ENCODE measurements at regions of chr5 and their contacts with region 1.

Region 1: DNA sequence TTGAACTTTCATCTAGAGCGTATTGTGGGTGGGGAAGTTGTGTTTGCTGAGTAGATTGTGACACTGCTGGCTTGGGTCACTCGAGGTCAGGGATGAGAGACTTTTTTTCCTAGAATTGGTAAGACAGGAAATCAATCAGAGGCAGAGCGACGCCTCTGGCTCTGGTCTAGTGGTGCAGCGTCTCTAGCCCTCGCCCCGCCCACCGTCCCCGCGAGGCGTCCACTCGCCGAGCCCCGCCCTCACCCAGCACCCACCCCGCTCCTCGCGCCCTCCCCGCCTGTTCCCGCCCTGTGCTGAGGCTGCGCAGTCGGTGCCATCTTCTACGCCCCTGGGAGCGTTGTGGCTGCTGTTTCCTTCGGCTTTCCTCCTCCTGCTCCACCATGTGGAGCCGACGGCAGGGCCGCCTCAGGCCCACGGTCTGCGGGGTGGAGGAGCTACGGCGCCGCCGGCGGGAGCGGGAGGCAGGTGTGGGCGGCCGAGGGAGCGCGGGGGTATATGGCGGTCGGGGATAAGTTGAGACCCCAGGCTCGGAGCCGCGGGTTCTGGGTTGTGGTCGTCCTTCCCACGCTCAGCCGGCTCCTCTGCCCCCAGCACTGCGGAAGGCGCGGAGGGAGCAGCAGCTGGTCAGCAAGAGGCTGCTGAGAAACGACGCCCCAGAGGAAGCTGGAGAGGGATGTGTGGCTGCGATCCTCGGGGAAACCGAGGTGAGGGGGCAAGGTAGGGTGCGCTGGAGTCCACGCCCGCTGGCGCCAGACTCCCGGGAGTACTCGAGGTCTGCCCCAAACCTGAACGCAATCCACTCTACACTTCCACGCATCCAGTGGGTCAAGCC is at the start of gene TMCO6:
- DNase-seq: peak; percentile 99
- H3K4me3 Mint-ChIP-seq: peak within 1 kb of the TSS; percentile 85
- H3K27ac Mint-ChIP-seq: peak within 1 kb of the TSS; percentile 94
- H3K4me1 Mint-ChIP-seq: peaks cover 41% of the 10 kb centered on the region
- H3K27me3 Mint-ChIP-seq: no peaks in the 10 kb centered on the region
- total RNA-seq, gene TMCO6: 33.7 to 33.8 TPM

Region 2: GRCh38 chr5:140362860-140363630 is 276.3 kb before region 1 on chr5:
- CTCF ChIA-PET with region 1: interaction called, 7 read pairs
- POLR2A ChIA-PET with region 1: no interaction called
- intact Hi-C with region 1: loop called (anchors 1 kb)
- DNase-seq: peak; percentile 91
- H3K4me3 Mint-ChIP-seq: peak overlapping the region; percentile 72
- H3K27ac Mint-ChIP-seq: peak overlapping the region; percentile 52
- H3K4me1 Mint-ChIP-seq: peaks cover 4% of the 10 kb centered on the region
- H3K27me3 Mint-ChIP-seq: peaks cover 3% of the 10 kb centered on the region

Region 3: DNA sequence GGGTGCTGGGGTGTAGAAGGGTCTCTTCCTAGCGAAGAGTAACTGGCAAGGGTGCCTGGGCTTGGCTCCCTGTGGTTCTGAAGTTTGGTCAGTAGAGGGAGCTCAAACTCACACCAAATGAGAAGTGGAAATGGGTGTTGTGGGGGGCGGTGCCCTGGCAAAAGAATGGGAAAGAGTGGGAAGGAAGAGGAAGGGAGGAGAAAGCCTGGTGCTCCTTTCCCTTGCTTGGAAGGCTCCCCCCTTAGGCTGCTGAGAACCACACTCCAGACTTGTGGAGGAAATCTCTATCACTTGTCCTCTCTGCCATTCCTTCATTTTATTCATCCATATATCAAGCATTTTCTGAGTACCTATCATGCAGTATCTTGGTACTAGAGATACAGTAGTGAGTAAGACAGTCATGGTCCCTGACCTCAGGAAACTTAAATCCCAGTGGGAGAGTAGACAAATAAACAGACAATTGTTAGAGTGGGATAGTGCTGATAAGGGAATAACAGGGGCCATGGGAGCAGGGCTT is 266.3 kb before region 1 on chr5:
- CTCF ChIA-PET with region 1: interaction called, 30 read pairs
- POLR2A ChIA-PET with region 1: no interaction called
- intact Hi-C with region 1: loop called (anchors 1 kb)
- DNase-seq: peak; percentile 48
- H3K4me3 Mint-ChIP-seq: no peak overlapping the region
- H3K27ac Mint-ChIP-seq: no peak overlapping the region
- H3K4me1 Mint-ChIP-seq: peaks cover 3% of the 10 kb centered on the region
- H3K27me3 Mint-ChIP-seq: no peaks in the 10 kb centered on the region

Region 4: GRCh38 chr5:140547508-140548299 is 91.7 kb before region 1 on chr5 and contains the start of gene EIF4EBP3:
- CTCF ChIA-PET with region 1: interaction called, 17 read pairs
- POLR2A ChIA-PET with region 1: interaction called, 6 read pairs
- intact Hi-C with region 1: no loop called
- DNase-seq: peak; percentile 91
- H3K4me3 Mint-ChIP-seq: peak within 1 kb of the TSS; percentile 76
- H3K27ac Mint-ChIP-seq: peak within 1 kb of the TSS; percentile 90
- H3K4me1 Mint-ChIP-seq: peaks cover 44% of the 10 kb centered on the region
- H3K27me3 Mint-ChIP-seq: no peaks in the 10 kb centered on the region
- total RNA-seq, gene EIF4EBP3: 15.7 to 16.6 TPM

Region 5: GRCh38 chr5:140557136-140557805 is 82.1 kb before region 1 on chr5 and contains the start of gene SRA1:
- CTCF ChIA-PET with region 1: interaction called, 9 read pairs
- POLR2A ChIA-PET with region 1: interaction called, 6 read pairs
- intact Hi-C with region 1: loop called (anchors 1 kb)
- DNase-seq: peak; percentile 93
- H3K4me3 Mint-ChIP-seq: peak within 1 kb of the TSS; percentile 86
- H3K27ac Mint-ChIP-seq: peak within 1 kb of the TSS; percentile 90
- H3K4me1 Mint-ChIP-seq: peaks cover 45% of the 10 kb centered on the region
- H3K27me3 Mint-ChIP-seq: no peaks in the 10 kb centered on the region
- total RNA-seq, gene SRA1: 46.0 to 46.7 TPM

Region 6: GRCh38 chr5:140564196-140565023 is 75.0 kb before region 1 on chr5 and contains the starts of genes APBB3 and SLC35A4:
- CTCF ChIA-PET with region 1: interaction called, 14 read pairs
- POLR2A ChIA-PET with region 1: no interaction called
- intact Hi-C with region 1: loop called (anchors 1 kb)
- DNase-seq: peak; percentile 98
- H3K4me3 Mint-ChIP-seq: peak within 1 kb of the TSS; percentile 91
- H3K27ac Mint-ChIP-seq: peak within 1 kb of the TSS; percentile 93
- H3K4me1 Mint-ChIP-seq: peaks cover 47% of the 10 kb centered on the region
- H3K27me3 Mint-ChIP-seq: no peaks in the 10 kb centered on the region
- total RNA-seq, gene APBB3: 16.3 to 16.8 TPM
- total RNA-seq, gene SLC35A4: 68.7 to 69.7 TPM

Region 7: DNA sequence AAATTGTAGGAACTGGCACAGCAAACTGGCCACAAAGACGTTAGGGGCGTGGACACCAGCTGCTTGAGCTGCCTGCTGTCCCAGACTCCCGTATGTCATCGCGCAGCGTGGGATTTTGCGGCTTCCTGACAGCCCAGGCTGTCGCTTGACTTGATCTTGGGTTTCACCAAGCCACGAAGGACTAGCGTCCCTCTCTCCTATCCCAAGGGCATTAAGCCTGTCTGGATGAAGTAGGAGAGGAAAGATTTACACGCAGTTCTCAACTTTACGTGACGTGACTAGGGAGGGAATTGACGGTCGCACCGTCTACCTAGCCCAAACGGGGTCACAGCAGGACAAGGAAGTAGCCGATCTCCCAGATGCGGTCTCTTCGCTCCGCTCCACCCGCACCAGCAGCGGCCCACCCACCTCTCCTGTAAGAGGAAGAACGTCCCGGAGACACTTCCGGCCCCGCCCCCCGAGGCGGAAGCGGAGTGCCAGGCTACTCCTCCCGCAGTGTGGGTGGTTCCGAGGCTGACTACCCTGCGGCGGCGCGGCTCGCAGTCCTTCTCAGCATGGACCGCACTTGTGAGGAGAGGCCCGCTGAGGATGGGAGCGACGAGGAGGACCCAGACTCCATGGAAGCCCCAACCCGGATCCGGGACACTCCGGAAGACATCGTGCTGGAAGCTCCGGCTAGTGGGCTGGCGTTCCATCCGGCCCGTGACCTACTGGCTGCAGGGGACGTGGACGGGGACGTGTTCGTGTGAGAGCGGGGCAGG is 25.2 kb after region 1 on chr5 and contains the start of gene WDR55:
- CTCF ChIA-PET with region 1: no interaction called
- POLR2A ChIA-PET with region 1: interaction called, 4 read pairs
- intact Hi-C with region 1: loop called (anchors 1 kb)
- DNase-seq: peak; percentile 98
- H3K4me3 Mint-ChIP-seq: peak within 1 kb of the TSS; percentile 99
- H3K27ac Mint-ChIP-seq: peak within 1 kb of the TSS; percentile 94
- H3K4me1 Mint-ChIP-seq: peaks cover 27% of the 10 kb centered on the region
- H3K27me3 Mint-ChIP-seq: no peaks in the 10 kb centered on the region
- total RNA-seq, gene WDR55: 30.4 to 32.1 TPM